Caco-2 (cell line): ENCODE measurements at regions of chr1 and their contacts with region 1.

Region 1: GRCh38 chr1:24897767-24898483 is 32.2 kb downstream of the RUNX3 start:
- DNase-seq: peak; percentile 53 to 71
- H3K4me3 ChIP-seq: no peak overlapping the region
- H3K4me3 Mint-ChIP-seq: no peak overlapping the region
- H3K27ac Mint-ChIP-seq: no peak overlapping the region
- H3K4me1 ChIP-seq: no peaks in the 10 kb centered on the region
- H3K4me1 Mint-ChIP-seq: no peaks in the 10 kb centered on the region
- H3K27me3 ChIP-seq: no peaks in the 10 kb centered on the region
- H3K27me3 Mint-ChIP-seq: no peaks in the 10 kb centered on the region
- CTCF ChIP-seq: peak; percentile 68 to 80

Region 2: GRCh38 chr1:24861821-24862727 is 35.9 kb before region 1 on chr1:
- CTCF ChIA-PET with region 1: no interaction called
- POLR2A ChIA-PET with region 1: no interaction called
- intact Hi-C with region 1: loop called (anchors 5 kb)
- DNase-seq: peak; percentile 26 to 56
- H3K4me3 ChIP-seq: no peak overlapping the region
- H3K4me3 Mint-ChIP-seq: peak overlapping the region; percentile 40
- H3K27ac Mint-ChIP-seq: peak overlapping the region; percentile 48
- H3K4me1 ChIP-seq: peaks cover 31% of the 10 kb centered on the region; the same call in 1 of the 2 replicates
- H3K4me1 Mint-ChIP-seq: peaks cover 17% of the 10 kb centered on the region
- H3K27me3 ChIP-seq: no peaks in the 10 kb centered on the region
- H3K27me3 Mint-ChIP-seq: no peaks in the 10 kb centered on the region
- CTCF ChIP-seq: no peak

Region 3: GRCh38 chr1:25095635-25096200 is 197.8 kb after region 1 on chr1:
- CTCF ChIA-PET with region 1: interaction called, 10 read pairs
- POLR2A ChIA-PET with region 1: no interaction called
- intact Hi-C with region 1: no loop called
- DNase-seq: no peak
- H3K4me3 ChIP-seq: no peak overlapping the region
- H3K4me3 Mint-ChIP-seq: no peak overlapping the region
- H3K27ac Mint-ChIP-seq: no peak overlapping the region
- H3K4me1 ChIP-seq: no peaks in the 10 kb centered on the region
- H3K4me1 Mint-ChIP-seq: peaks cover 3% of the 10 kb centered on the region
- H3K27me3 ChIP-seq: no peaks in the 10 kb centered on the region
- H3K27me3 Mint-ChIP-seq: no peaks in the 10 kb centered on the region
- CTCF ChIP-seq: no peak